Transverse colon (tissue), 4 donors: ENCODE measurements at regions of chr3 and their contacts with region 1.

Region 1: GRCh38 chr3:136142592-136142991 is 53.5 kb downstream of the MSL2 start:
- DNase-seq: no peak
- H3K4me3 ChIP-seq: no peak overlapping the region
- H3K27ac ChIP-seq: peak overlapping the region in 3 of 4 donors; percentile 8 to 47 (median 27)
- H3K4me1 ChIP-seq: peaks cover 0 to 6% (median 3%) of the 10 kb centered on the region in 4 donors
- H3K27me3 ChIP-seq: no peaks in the 10 kb centered on the region
- CTCF ChIP-seq: no peak
- EP300 ChIP-seq: no peak
- POLR2A ChIP-seq: no peak

Region 2: DNA sequence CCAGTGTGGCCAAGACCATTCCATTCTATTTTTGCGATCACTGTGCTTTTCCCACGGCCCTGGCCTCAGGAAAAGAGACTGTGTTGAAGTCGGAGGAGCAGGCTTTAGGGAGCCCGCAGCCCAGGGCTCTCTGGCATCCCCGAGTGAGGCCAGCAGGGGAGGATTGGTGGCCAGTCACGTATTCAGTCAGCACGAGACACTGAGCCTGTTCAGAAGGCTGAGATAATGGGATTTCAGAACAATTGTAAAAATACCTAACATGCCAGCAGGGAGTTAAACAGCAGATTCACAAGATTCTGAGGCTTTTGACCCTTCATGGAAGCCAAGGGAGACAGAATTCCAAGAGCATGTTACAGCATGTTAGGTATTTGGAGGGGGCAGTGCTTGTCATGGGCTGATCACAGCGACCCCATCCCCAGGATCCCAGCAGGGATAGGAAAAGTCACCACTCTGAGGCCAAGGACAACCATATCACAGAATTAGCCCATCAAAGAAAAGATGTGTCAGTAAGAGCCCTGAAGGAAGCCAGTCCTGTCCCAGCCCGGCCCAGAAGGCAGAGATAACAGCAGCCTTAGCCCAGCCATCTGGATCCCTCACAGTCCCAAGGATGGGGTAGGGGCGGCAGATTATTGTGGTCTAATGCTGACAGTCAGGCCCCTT is 1808.9 kb before region 1 on chr3:
- in situ Hi-C with region 1: no loop called
- intact Hi-C with region 1: loop called (anchors 5 kb)
- DNase-seq: no peak
- H3K4me3 ChIP-seq: no peak overlapping the region
- H3K27ac ChIP-seq: peak overlapping the region; percentile 62 to 76 (median 73)
- H3K4me1 ChIP-seq: peaks cover 19 to 41% (median 30%) of the 10 kb centered on the region in 4 donors
- H3K27me3 ChIP-seq: no peaks in the 10 kb centered on the region
- CTCF ChIP-seq: no peak
- EP300 ChIP-seq: no peak
- POLR2A ChIP-seq: no peak

Region 3: GRCh38 chr3:136166507-136166906 is 23.9 kb after region 1 on chr3:
- in situ Hi-C with region 1: no loop called
- intact Hi-C with region 1: no loop called
- DNase-seq: no peak
- H3K4me3 ChIP-seq: no peak overlapping the region
- H3K27ac ChIP-seq: no peak overlapping the region
- H3K4me1 ChIP-seq: peaks cover 0 to 55% (median 11%) of the 10 kb centered on the region in 4 donors
- H3K27me3 ChIP-seq: no peaks in the 10 kb centered on the region
- CTCF ChIP-seq: no peak
- EP300 ChIP-seq: no peak
- POLR2A ChIP-seq: no peak

Region 4: GRCh38 chr3:136473716-136474326 is 331.2 kb after region 1 on chr3:
- in situ Hi-C with region 1: no loop called
- intact Hi-C with region 1: no loop called
- DNase-seq: no peak
- H3K4me3 ChIP-seq: no peak overlapping the region
- H3K27ac ChIP-seq: no peak overlapping the region
- H3K4me1 ChIP-seq: no peaks in the 10 kb centered on the region
- H3K27me3 ChIP-seq: no peaks in the 10 kb centered on the region
- CTCF ChIP-seq: no peak
- EP300 ChIP-seq: no peak
- POLR2A ChIP-seq: no peak

Region 5: GRCh38 chr3:136642745-136643144 is 500.2 kb after region 1 on chr3:
- in situ Hi-C with region 1: no loop called
- intact Hi-C with region 1: no loop called
- DNase-seq: no peak
- H3K4me3 ChIP-seq: no peak overlapping the region
- H3K27ac ChIP-seq: no peak overlapping the region
- H3K4me1 ChIP-seq: no peaks in the 10 kb centered on the region
- H3K27me3 ChIP-seq: no peaks in the 10 kb centered on the region
- CTCF ChIP-seq: no peak
- EP300 ChIP-seq: no peak
- POLR2A ChIP-seq: no peak